ENCODE measurements at regions of chr1 and their contacts with region 1.

Region 1: GRCh38 chr1:244445320-244446181 is 6.2 kb downstream of the ADSS2 start:
- DNase-seq: peak; percentile 45
- H3K4me3 ChIP-seq: no peak overlapping the region
- H3K27ac ChIP-seq: peak overlapping the region; percentile 46
- H3K4me1 ChIP-seq: peaks cover 61% of the 10 kb centered on the region
- H3K27me3 ChIP-seq: no peaks in the 10 kb centered on the region
- CTCF ChIP-seq: no peak
- POLR2A ChIP-seq: no peak

Region 2: DNA sequence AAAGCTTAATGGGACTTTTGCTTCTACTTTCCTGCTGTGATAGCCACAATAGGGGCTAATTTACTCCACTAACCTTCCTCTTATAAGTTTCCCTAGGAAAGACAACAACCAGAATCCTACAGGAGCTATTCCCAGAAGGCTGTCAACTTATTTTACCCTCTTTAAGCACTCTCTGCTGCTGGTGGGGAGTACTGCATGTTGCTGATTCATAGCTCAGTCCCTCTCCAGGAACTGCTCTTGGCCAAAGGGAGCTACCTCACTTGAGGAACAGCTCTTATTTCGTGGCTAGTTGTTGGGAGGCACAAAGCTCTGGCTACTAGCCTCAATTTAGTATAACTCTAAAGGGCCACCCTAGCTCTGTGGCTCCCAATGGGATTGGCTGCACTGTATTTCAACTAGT is 31.0 kb before region 1 on chr1:
- CTCF ChIA-PET with region 1: interaction called, 15 read pairs
- POLR2A ChIA-PET with region 1: no interaction called
- dilution Hi-C with region 1: no loop called
- intact Hi-C with region 1: no loop called
- DNase-seq: peak; percentile 64
- H3K4me3 ChIP-seq: no peak overlapping the region
- H3K27ac ChIP-seq: no peak overlapping the region
- H3K4me1 ChIP-seq: no peaks in the 10 kb centered on the region
- H3K27me3 ChIP-seq: no peaks in the 10 kb centered on the region
- CTCF ChIP-seq: peak; percentile 17 to 24
- POLR2A ChIP-seq: no peak